ENCODE measurements at regions of chr14 and their contacts with region 1.

Region 1: DNA sequence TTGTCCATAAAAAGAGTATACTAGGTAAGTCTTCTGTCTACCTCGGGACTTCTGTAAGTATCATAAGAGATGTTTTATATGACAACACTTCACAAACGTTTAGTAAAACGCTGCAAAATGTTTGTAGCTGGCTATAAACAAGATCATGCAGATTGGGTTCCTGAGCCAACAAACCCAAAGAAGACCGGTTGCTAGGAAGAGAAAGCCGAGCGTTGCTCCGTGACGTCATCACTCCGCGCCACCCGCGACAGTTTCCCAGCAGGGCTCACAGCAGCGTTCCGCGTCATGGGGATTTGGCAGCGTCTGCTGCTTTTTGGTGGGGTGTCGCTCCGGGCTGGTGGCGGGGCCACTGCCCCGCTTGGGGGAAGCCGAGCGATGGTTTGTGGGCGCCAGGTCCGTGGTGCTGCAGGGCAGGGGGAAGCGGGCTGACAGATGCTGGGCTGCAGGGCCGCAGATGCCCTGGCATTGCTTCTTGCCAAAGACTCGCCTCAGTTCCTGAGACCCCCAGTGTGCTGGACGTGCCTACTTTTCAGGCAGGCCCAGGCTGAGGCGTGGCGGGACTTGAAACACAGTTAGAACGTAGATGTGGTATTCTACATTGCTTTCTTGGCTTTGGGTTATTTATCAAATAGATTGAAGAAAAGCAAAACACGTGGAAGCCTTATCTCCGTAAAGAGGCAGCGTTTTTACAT is at the start of gene NUBPL:
- DNase-seq: peak; percentile 97
- ATAC-seq: peak; percentile 92
- H3K4me3 Mint-ChIP-seq: peak within 1 kb of the TSS; percentile 97
- H3K27ac Mint-ChIP-seq: peak within 1 kb of the TSS; percentile 97
- H3K4me1 Mint-ChIP-seq: peaks cover 24% of the 10 kb centered on the region
- H3K27me3 Mint-ChIP-seq: peaks cover 6% of the 10 kb centered on the region
- CTCF ChIP-seq: no peak
- total RNA-seq, gene NUBPL: 11.7 and 11.9 TPM in 2 replicates

Region 2: GRCh38 chr14:30558675-30559555 is 1002.4 kb before region 1 on chr14 and contains the start of gene G2E3:
- CTCF ChIA-PET with region 1: no interaction called
- POLR2A ChIA-PET with region 1: no interaction called
- intact Hi-C with region 1: loop called (anchors 10 kb)
- DNase-seq: peak; percentile 88
- ATAC-seq: peak; percentile 99
- H3K4me3 Mint-ChIP-seq: peak within 1 kb of the TSS; percentile 100
- H3K27ac Mint-ChIP-seq: peak within 1 kb of the TSS; percentile 98
- H3K4me1 Mint-ChIP-seq: peaks cover 29% of the 10 kb centered on the region
- H3K27me3 Mint-ChIP-seq: no peaks in the 10 kb centered on the region
- CTCF ChIP-seq: no peak
- total RNA-seq, gene G2E3: 23.5 and 32.6 TPM in 2 replicates

Region 3: DNA sequence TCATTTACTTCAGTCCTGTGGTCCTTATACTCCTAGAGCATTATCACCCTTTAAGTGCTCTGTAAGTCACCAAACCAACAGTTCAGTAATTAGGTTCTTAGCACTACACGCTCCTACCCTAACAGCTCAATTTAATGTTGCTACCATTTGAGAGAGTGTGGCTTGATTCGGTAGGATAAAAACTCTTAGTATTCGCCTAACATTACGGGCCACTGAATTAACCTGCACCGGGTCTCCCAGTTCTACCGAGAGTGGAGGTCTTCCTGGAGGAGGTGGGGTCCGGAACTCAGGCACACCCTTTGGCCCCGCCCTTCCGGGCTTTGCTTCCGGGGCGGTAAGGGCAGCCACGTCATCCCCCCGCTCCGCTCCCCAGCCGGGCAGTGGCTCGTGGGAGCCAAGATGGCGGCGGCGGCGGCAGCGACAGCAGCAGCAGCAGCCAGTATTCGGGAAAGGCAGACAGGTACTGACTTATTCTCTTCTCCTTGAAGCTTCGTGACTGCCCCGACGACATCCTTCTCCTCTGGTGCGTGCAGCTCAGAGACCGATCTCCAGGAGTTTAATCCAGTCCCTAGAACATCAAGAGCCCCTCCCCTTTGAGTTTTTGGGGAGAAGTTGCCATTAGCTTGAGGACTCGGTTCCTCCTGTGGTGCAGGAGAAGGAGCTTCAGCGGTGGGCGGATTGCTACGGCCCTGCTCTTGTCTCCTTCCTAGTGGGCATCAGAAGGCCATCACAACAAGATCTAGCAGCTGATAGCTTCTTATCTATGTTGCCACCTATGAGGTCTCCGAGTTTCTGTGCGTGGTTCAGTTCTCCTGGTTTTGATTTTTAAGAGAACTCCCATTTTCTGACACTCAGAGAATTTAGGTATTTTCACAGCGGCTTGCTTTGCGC is 939.1 kb before region 1 on chr14 and contains the start of gene SCFD1:
- CTCF ChIA-PET with region 1: no interaction called
- POLR2A ChIA-PET with region 1: no interaction called
- intact Hi-C with region 1: loop called (anchors 2 kb)
- DNase-seq: peak; percentile 92
- ATAC-seq: peak; percentile 97
- H3K4me3 Mint-ChIP-seq: peak within 1 kb of the TSS; percentile 93
- H3K27ac Mint-ChIP-seq: peak within 1 kb of the TSS; percentile 93
- H3K4me1 Mint-ChIP-seq: peaks cover 47% of the 10 kb centered on the region
- H3K27me3 Mint-ChIP-seq: no peaks in the 10 kb centered on the region
- CTCF ChIP-seq: no peak
- total RNA-seq, gene SCFD1: 70.1 and 83.6 TPM in 2 replicates

Region 4: GRCh38 chr14:31320216-31320615 is 241.1 kb before region 1 on chr14:
- CTCF ChIA-PET with region 1: no interaction called
- POLR2A ChIA-PET with region 1: no interaction called
- intact Hi-C with region 1: no loop called
- DNase-seq: no peak
- ATAC-seq: no peak
- H3K4me3 Mint-ChIP-seq: no peak overlapping the region
- H3K27ac Mint-ChIP-seq: no peak overlapping the region
- H3K4me1 Mint-ChIP-seq: no peaks in the 10 kb centered on the region
- H3K27me3 Mint-ChIP-seq: no peaks in the 10 kb centered on the region
- CTCF ChIP-seq: no peak

Region 5: DNA sequence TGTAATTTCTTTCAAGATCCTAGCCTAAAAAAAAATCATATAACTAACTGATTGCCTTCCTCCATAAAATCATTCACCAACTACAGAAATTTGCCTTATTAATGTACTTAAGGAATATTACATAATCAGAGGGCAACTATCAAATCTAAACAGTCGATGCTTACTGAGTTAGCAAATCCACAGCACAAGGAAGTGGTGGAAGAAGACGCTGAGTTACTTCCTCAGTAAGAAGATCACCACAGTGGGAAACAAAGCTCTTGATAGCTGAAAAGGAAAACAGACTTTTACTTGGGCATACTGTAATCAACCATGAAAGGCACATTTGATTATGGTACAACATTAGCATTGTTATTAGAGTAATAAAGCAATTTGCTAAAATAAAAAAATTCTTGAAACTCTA is 189.7 kb before region 1 on chr14:
- CTCF ChIA-PET with region 1: no interaction called
- POLR2A ChIA-PET with region 1: no interaction called
- intact Hi-C with region 1: no loop called
- DNase-seq: no peak
- ATAC-seq: no peak
- H3K4me3 Mint-ChIP-seq: no peak overlapping the region
- H3K27ac Mint-ChIP-seq: no peak overlapping the region
- H3K4me1 Mint-ChIP-seq: no peaks in the 10 kb centered on the region
- H3K27me3 Mint-ChIP-seq: no peaks in the 10 kb centered on the region
- CTCF ChIP-seq: no peak

Region 6: GRCh38 chr14:31420319-31421111 is 140.8 kb before region 1 on chr14 and contains the start of gene HEATR5A:
- CTCF ChIA-PET with region 1: no interaction called
- POLR2A ChIA-PET with region 1: interaction called, 4 read pairs
- intact Hi-C with region 1: loop called (anchors 1 kb)
- DNase-seq: peak; percentile 95
- ATAC-seq: peak; percentile 97
- H3K4me3 Mint-ChIP-seq: peak within 1 kb of the TSS; percentile 96
- H3K27ac Mint-ChIP-seq: peak within 1 kb of the TSS; percentile 90
- H3K4me1 Mint-ChIP-seq: peaks cover 22% of the 10 kb centered on the region
- H3K27me3 Mint-ChIP-seq: no peaks in the 10 kb centered on the region
- CTCF ChIP-seq: no peak
- total RNA-seq, gene HEATR5A: 11.1 and 13.2 TPM in 2 replicates

Region 7: GRCh38 chr14:31456841-31457664 is 104.2 kb before region 1 on chr14 and contains the start of gene DTD2:
- CTCF ChIA-PET with region 1: no interaction called
- POLR2A ChIA-PET with region 1: interaction called, 4 read pairs
- intact Hi-C with region 1: loop called (anchors 1 kb)
- DNase-seq: peak; percentile 82
- ATAC-seq: peak; percentile 98
- H3K4me3 Mint-ChIP-seq: peak within 1 kb of the TSS; percentile 99
- H3K27ac Mint-ChIP-seq: peak within 1 kb of the TSS; percentile 96
- H3K4me1 Mint-ChIP-seq: peaks cover 31% of the 10 kb centered on the region
- H3K27me3 Mint-ChIP-seq: no peaks in the 10 kb centered on the region
- CTCF ChIP-seq: no peak
- total RNA-seq, gene DTD2: 19.8 and 21.3 TPM in 2 replicates

Region 8: DNA sequence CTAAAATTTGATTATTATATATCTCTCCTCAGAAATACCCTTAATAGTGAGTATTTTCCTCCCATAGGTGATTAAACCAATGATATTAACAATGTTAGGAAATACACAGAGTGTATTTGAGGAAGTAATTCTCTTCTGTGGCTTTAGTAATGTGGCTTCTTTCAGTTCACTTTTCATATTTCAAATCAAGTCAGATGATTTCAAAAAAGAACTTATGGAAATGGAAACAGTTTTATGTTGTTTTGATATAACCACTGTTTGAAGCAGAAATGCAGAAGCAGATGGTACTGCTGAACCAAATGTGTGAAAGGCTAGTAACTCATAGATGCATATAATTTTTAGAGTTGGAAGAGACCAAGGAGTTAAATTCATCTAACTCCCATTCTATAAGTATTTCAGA is 71.6 kb before region 1 on chr14:
- CTCF ChIA-PET with region 1: no interaction called
- POLR2A ChIA-PET with region 1: no interaction called
- intact Hi-C with region 1: loop called (anchors 2 kb)
- DNase-seq: no peak
- ATAC-seq: peak; percentile 75
- H3K4me3 Mint-ChIP-seq: peak overlapping the region; percentile 25
- H3K27ac Mint-ChIP-seq: peak overlapping the region; percentile 16
- H3K4me1 Mint-ChIP-seq: peaks cover 71% of the 10 kb centered on the region
- H3K27me3 Mint-ChIP-seq: no peaks in the 10 kb centered on the region
- CTCF ChIP-seq: no peak

Region 9: GRCh38 chr14:31703056-31703455 is 141.8 kb after region 1 on chr14:
- CTCF ChIA-PET with region 1: no interaction called
- POLR2A ChIA-PET with region 1: no interaction called
- intact Hi-C with region 1: no loop called
- DNase-seq: no peak
- ATAC-seq: no peak
- H3K4me3 Mint-ChIP-seq: no peak overlapping the region
- H3K27ac Mint-ChIP-seq: no peak overlapping the region
- H3K4me1 Mint-ChIP-seq: no peaks in the 10 kb centered on the region
- H3K27me3 Mint-ChIP-seq: no peaks in the 10 kb centered on the region
- CTCF ChIP-seq: no peak

Region 10: GRCh38 chr14:33150666-33151428 is 1589.5 kb after region 1 on chr14:
- CTCF ChIA-PET with region 1: no interaction called
- POLR2A ChIA-PET with region 1: no interaction called
- intact Hi-C with region 1: no loop called
- DNase-seq: no peak
- ATAC-seq: no peak
- H3K4me3 Mint-ChIP-seq: no peak overlapping the region
- H3K27ac Mint-ChIP-seq: no peak overlapping the region
- H3K4me1 Mint-ChIP-seq: no peaks in the 10 kb centered on the region
- H3K27me3 Mint-ChIP-seq: no peaks in the 10 kb centered on the region
- CTCF ChIP-seq: no peak

Measured in activated B cell treated with CpG ODN at 0.5 μM for 24 hours (primary cell).